ENCODE measurements at regions of chr22 and their contacts with region 1.

Region 1: DNA sequence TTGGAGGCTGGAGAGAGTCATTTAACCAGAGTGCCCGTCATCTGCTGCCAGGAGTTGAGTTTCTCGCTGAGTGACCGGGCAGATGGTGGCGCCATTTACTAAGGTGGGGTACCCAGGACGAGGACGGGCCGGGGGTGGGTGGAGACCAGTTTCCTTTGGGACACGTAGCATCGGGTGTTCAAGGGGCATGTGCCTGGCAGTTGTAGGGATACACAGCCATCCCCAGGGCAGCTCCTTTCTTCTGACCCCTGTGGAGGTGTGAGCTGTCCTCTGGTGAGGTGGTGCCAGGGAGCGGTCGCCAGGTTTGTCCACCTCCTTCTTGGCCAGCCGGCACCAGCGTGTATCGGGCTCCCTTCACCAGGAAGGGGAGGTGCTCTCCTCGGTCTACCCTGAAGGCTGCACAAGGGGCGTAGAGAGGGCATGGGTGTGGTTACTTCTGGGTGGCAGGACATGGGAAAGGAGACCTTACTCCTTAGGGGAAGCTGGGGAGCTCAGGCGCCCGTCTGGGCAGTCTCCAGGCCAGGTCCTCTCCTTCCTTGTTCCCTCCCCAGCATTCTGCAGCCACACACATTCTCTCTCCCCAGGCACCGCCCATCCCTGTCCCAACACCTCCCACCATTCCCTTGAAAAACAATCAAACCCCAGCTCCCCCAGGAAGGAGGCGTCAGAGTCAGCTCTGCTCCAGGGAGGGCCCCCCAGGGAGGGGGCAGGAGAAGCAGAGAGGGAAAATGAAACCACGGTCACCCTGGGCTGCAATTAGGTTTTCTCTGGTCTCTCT is 10.3 kb upstream of the MB start:
- DNase-seq: no peak
- H3K4me3 Mint-ChIP-seq: peak overlapping the region; percentile 69
- H3K27ac Mint-ChIP-seq: peak overlapping the region; percentile 24
- H3K4me1 Mint-ChIP-seq: peaks cover 25% of the 10 kb centered on the region
- H3K27me3 Mint-ChIP-seq: peaks cover 13% of the 10 kb centered on the region

Region 2: DNA sequence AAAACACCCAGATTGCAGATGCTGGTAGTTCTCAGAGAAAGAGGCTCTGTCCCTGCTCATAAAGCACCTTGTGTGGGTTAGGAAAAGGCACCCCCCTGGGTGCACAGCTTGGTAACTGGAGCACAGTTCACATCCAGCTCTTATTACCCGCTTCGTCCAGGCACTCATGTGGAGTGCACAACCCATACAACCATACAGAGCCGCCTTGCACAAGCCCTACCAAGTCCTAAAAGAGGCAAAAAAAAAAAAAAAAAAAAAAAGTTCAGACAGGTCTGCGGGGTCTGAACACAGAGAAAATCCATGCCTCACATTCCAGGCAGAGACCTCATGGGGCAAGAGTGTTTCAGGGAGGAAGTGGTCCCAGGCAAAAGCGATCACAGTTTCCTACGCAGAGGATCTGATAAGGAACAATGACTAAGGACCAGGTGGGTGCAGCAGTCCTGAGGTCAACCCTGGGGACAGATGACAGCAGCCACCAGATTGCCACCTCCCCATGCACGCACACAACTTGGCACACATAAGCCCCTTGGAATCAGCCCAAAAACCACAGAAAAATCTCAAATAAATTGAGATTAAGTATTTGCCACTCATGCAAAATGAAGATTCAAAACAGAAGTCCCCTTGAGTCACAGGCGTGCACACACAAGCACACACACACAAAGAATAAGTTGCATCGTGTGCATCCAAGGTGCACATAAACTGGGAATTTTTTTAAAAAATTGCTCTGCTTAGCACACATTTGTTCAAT is 22.7 kb before region 1 on chr22:
- intact Hi-C with region 1: loop called (anchors 2 kb)
- DNase-seq: no peak
- H3K4me3 Mint-ChIP-seq: no peak overlapping the region
- H3K27ac Mint-ChIP-seq: no peak overlapping the region
- H3K4me1 Mint-ChIP-seq: peaks cover 25% of the 10 kb centered on the region
- H3K27me3 Mint-ChIP-seq: peaks cover 14% of the 10 kb centered on the region

Region 3: DNA sequence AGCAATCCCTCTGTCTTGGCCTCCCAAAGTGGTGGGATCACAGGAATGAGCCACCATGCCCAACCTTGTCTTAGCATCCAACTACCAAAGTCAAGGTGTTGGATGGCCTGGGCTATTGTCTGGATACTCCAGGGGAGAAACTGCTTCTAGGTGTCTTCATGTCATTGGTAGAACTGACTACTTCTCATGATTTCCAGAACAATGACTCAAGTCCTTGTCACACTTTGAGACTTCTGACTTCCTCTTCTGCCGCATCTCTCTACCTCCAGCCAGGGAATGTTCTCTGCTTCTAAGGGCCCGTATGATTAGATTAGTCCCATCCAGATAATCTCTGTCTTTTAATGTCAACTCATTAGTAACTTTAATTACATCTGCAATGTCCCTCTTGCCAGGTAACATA is 51.4 kb after region 1 on chr22:
- intact Hi-C with region 1: loop called (anchors 1 kb)
- DNase-seq: no peak
- H3K4me3 Mint-ChIP-seq: no peak overlapping the region
- H3K27ac Mint-ChIP-seq: peak overlapping the region; percentile 19
- H3K4me1 Mint-ChIP-seq: peaks cover 15% of the 10 kb centered on the region
- H3K27me3 Mint-ChIP-seq: peaks cover 5% of the 10 kb centered on the region

Region 4: DNA sequence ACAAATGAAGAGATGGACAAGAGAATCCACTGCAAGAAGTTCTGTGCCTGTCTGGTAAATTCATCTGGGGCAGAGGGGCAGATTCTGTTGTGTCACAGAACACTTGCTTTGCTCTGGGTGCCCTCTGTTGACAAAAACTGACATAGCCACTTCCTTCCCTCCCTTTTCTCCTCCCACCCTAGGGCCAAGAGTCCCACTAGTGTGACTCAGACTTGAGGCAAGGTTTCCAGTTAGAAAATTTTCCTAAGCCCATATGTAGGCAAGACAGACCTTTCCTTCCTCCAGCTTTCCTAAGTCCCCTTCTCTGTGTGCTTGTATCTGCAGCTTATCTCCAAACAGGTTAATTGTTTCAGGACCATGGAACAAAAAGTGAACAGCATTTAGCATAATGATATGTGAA is 294.3 kb after region 1 on chr22:
- intact Hi-C with region 1: loop called (anchors 1 kb)
- DNase-seq: peak; percentile 16
- H3K4me3 Mint-ChIP-seq: no peak overlapping the region
- H3K27ac Mint-ChIP-seq: no peak overlapping the region
- H3K4me1 Mint-ChIP-seq: peaks cover 7% of the 10 kb centered on the region
- H3K27me3 Mint-ChIP-seq: peaks cover 2% of the 10 kb centered on the region

Region 5: GRCh38 chr22:36123673-36124630 is 496.5 kb after region 1 on chr22:
- intact Hi-C with region 1: loop called (anchors 1 kb)
- DNase-seq: peak; percentile 90
- H3K4me3 Mint-ChIP-seq: peak overlapping the region; percentile 32
- H3K27ac Mint-ChIP-seq: peak overlapping the region; percentile 81
- H3K4me1 Mint-ChIP-seq: peaks cover 7% of the 10 kb centered on the region
- H3K27me3 Mint-ChIP-seq: peaks cover 13% of the 10 kb centered on the region